A673 (cell line): ENCODE measurements at regions of chr9 and their contacts with region 1.

Region 1: GRCh38 chr9:92293452-92294296 is at the start of gene IARS1:
- DNase-seq: peak; percentile 99
- H3K4me3 ChIP-seq: peak within 1 kb of the TSS; percentile 65
- H3K27ac ChIP-seq: peak within 1 kb of the TSS; percentile 96
- H3K4me1 ChIP-seq: peaks cover 4% of the 10 kb centered on the region
- H3K27me3 ChIP-seq: no peaks in the 10 kb centered on the region
- CTCF ChIP-seq: peak; percentile 59
- total RNA-seq, gene IARS1: 273 and 315 TPM in 2 replicates

Region 2: GRCh38 chr9:92254381-92255337 is 39.0 kb before region 1 on chr9:
- CTCF ChIA-PET with region 1: no interaction called
- POLR2A ChIA-PET with region 1: interaction called, 3 read pairs
- intact Hi-C with region 1: loop called (anchors 5 kb)
- DNase-seq: no peak
- H3K4me3 ChIP-seq: no peak overlapping the region
- H3K27ac ChIP-seq: no peak overlapping the region
- H3K4me1 ChIP-seq: no peaks in the 10 kb centered on the region
- H3K27me3 ChIP-seq: no peaks in the 10 kb centered on the region
- CTCF ChIP-seq: no peak

Region 3: DNA sequence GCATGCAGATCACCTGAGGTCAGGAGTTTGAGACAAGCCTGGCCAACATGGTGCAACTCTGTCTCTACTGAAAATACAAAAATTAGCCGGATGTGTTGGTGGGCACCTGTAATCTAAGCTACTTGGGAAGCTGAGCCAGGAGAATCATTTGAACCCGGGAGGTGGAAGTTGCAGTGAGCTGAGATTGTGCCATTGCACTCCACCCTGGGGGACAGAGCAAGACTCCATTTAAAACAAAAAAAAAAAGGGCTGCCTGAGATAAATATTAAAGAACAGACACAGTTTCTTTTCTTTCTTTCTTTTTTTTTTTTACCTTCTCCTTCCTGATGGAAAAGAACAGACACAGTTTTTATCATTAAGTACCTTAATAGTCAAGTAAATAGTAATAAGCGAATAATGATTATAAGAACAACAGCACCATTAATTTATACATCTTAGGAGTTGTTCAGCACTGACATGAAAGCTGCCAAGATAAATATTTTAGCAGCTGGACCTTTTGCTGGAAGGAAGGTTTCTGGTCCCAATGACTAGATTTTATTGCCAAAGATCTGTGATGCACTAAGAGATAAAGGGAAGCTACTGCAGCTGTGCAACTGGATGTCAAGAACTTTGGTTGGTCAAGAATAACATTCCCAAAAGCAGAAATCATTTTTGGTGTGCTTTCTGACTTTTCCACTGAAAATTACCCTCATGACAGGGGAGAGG is 39.1 kb after region 1 on chr9:
- CTCF ChIA-PET with region 1: no interaction called
- POLR2A ChIA-PET with region 1: no interaction called
- intact Hi-C with region 1: no loop called
- DNase-seq: no peak
- H3K4me3 ChIP-seq: no peak overlapping the region
- H3K27ac ChIP-seq: no peak overlapping the region
- H3K4me1 ChIP-seq: peaks cover 4% of the 10 kb centered on the region
- H3K27me3 ChIP-seq: no peaks in the 10 kb centered on the region
- CTCF ChIP-seq: no peak

Region 4: GRCh38 chr9:92547356-92547755 is 253.7 kb after region 1 on chr9:
- CTCF ChIA-PET with region 1: no interaction called
- POLR2A ChIA-PET with region 1: interaction called, 12 read pairs
- intact Hi-C with region 1: no loop called
- DNase-seq: no peak
- H3K4me3 ChIP-seq: no peak overlapping the region
- H3K27ac ChIP-seq: no peak overlapping the region
- H3K4me1 ChIP-seq: no peaks in the 10 kb centered on the region
- H3K27me3 ChIP-seq: no peaks in the 10 kb centered on the region
- CTCF ChIP-seq: no peak